H1 (cell line): ENCODE measurements at regions of chr19 and their contacts with region 1.

Region 1: GRCh38 chr19:48872182-48872883 is at the start of gene PPP1R15A:
- DNase-seq: peak; percentile 95 to 100
- H3K4me3 ChIP-seq: peak within 1 kb of the TSS; percentile 80 to 97 (median 92)
- H3K27ac ChIP-seq: peak within 1 kb of the TSS; percentile 98
- H3K4me1 ChIP-seq: peaks cover 5 to 27% (median 15%) of the 10 kb centered on the region in 4 experiments
- H3K27me3 ChIP-seq: no peaks in the 10 kb centered on the region
- CTCF ChIP-seq: peak in 1 of 3 experiments; percentile 4; a peak in 1 of 4 replicates
- EP300 ChIP-seq: no peak
- POLR2A ChIP-seq: peak; percentile 99
- RAD21 ChIP-seq: no peak
- total RNA-seq, gene PPP1R15A: 12.8 and 14.0 TPM in 2 replicates

Region 2: DNA sequence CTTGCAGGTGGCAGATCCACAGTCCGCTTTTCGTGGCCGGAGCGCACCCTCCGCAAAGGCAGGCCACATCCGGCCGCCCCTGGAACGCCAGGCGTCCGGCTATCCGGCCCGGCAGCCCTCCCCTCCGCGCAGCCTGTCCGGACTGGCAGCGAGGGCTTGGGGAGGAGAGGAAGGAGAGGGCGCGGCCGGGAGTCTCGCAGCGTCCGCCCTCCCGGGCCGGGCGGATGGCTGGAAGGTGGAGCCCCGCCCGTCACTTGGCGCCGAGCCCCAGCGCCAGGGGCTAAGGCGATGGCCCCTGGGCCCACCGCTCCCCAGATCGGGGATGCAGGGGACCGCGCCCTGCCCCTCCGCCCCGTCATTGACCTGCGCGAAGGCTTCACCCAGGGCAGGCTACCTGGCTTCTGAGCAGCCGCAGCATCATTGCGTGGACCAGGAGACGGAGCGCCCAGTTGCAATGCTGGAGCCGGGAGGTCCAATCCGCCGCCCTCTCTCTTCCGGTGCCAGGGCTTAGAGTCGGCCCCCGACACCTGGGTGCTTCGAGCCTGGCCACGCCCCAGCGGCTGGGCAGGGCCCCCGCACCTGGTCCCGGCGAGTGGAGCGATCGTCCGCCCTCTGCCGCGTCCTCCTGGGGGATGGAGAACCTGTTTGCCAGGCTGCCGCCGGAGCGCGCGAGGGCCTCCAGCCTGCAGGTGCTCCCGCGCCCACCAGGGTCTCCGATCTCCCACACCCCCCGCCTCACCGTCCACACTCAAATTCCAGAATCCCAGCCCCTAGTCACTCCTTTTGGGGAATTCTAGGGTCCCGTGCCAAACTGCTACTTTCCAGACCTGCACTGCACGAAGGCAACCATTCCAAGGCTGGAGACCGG is 119.6 kb before region 1 on chr19 and contains the start of gene FUT1:
- CTCF ChIA-PET with region 1: no interaction called
- POLR2A ChIA-PET with region 1: no interaction called
- DNase-seq: peak; percentile 61 to 94
- H3K4me3 ChIP-seq: peak within 1 kb of the TSS; percentile 92 to 97 (median 96)
- H3K27ac ChIP-seq: peak within 1 kb of the TSS; percentile 64; the same call in 1 of the 2 replicates
- H3K4me1 ChIP-seq: peaks cover 3 to 25% (median 18%) of the 10 kb centered on the region in 4 experiments
- H3K27me3 ChIP-seq: no peaks in the 10 kb centered on the region
- CTCF ChIP-seq: peak in 2 of 3 experiments; percentile 14 to 28; a peak in 2 of 4 replicates
- EP300 ChIP-seq: peak in 1 of 2 experiments; percentile 54; a peak in 1 of 3 replicates
- POLR2A ChIP-seq: peak in 1 of 2 experiments; percentile 73; a peak in 2 of 3 replicates
- RAD21 ChIP-seq: no peak; a peak in 1 of 4 replicates
- total RNA-seq, gene FUT1: 12.2 and 12.9 TPM in 2 replicates

Region 3: DNA sequence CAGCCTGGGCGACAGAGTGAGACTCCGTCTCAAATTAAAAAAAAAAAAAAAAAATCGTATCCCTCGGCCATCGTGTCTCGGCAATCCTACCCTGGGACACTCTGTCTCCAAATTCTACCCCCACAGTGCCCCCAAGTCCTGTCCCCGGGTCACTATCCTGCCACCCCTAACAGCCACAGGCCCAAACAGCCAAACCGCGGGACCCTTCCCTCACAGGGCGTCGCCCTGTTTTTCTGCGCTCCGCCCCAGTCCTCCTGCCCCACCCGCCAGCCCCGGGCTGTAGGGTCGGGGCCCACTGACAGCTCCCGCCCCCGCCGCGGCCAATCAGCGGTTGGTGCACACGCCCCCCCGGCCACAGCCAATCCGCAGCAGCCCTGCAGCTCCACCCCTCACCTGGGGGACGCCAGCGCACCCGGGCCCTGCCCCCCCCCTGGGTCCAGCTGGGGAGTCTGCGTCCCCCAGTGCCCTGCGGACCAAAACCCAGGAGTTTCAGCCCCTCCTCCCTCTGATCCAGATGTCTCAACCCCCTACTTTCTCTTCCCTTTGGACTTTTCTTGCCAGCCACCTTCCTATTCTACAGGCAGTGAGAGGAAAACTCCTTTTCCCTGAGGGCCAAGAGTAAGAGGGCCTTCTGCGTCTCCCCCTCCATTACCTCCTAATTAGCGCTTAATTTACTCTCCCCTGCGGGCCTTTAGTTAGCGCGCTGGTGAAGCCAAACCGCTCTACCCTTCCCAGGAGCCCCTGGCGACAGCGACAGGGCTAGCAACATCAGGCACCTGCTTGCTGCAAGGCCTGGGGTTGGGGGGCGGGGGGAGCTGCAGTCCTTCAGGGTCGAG is 60.0 kb before region 1 on chr19:
- CTCF ChIA-PET with region 1: no interaction called
- POLR2A ChIA-PET with region 1: interaction called, 12 read pairs
- DNase-seq: peak in 1 of 2 experiments; percentile 89
- H3K4me3 ChIP-seq: peak overlapping the region in 3 of 4 experiments; percentile 3 to 52 (median 26); a peak in 5 of 8 replicates
- H3K27ac ChIP-seq: peak overlapping the region; percentile 71; the same call in 1 of the 2 replicates
- H3K4me1 ChIP-seq: peaks cover 3 to 15% (median 10%) of the 10 kb centered on the region in 4 experiments
- H3K27me3 ChIP-seq: peaks cover 0 to 11% (median 0%) of the 10 kb centered on the region in 4 experiments; a peak in 3 of 7 replicates
- CTCF ChIP-seq: peak in 2 of 3 experiments; percentile 13 to 20; a peak in 2 of 4 replicates
- EP300 ChIP-seq: peak in 1 of 2 experiments; percentile 94; a peak in 1 of 3 replicates
- POLR2A ChIP-seq: 0 out of 3 replicates have a peak, but pooled peaks of 1 of the 2 experiments have one; percentile 28
- RAD21 ChIP-seq: no peak; a peak in 1 of 4 replicates

Region 4: GRCh38 chr19:48842789-48843162 is 29.6 kb before region 1 on chr19:
- CTCF ChIA-PET with region 1: interaction called, 7 read pairs
- POLR2A ChIA-PET with region 1: interaction called, 40 read pairs
- DNase-seq: peak in 1 of 2 experiments; percentile 75
- H3K4me3 ChIP-seq: no peak overlapping the region
- H3K27ac ChIP-seq: no peak overlapping the region
- H3K4me1 ChIP-seq: no peaks in the 10 kb centered on the region; a peak in 1 of 7 replicates
- H3K27me3 ChIP-seq: no peaks in the 10 kb centered on the region
- CTCF ChIP-seq: peak; percentile 27 to 80 (median 76)
- EP300 ChIP-seq: no peak
- POLR2A ChIP-seq: no peak
- RAD21 ChIP-seq: peak; percentile 71 to 81

Region 5: GRCh38 chr19:48858984-48859710 is 13.2 kb before region 1 on chr19:
- CTCF ChIA-PET with region 1: interaction called, 4 read pairs
- POLR2A ChIA-PET with region 1: interaction called, 43 read pairs
- DNase-seq: peak in 1 of 2 experiments; percentile 69
- H3K4me3 ChIP-seq: no peak overlapping the region
- H3K27ac ChIP-seq: no peak overlapping the region
- H3K4me1 ChIP-seq: peaks cover 0 to 6% (median 0%) of the 10 kb centered on the region in 4 experiments; a peak in 1 of 7 replicates
- H3K27me3 ChIP-seq: no peaks in the 10 kb centered on the region; a peak in 1 of 7 replicates
- CTCF ChIP-seq: no peak
- EP300 ChIP-seq: no peak
- POLR2A ChIP-seq: no peak
- RAD21 ChIP-seq: no peak

Region 6: DNA sequence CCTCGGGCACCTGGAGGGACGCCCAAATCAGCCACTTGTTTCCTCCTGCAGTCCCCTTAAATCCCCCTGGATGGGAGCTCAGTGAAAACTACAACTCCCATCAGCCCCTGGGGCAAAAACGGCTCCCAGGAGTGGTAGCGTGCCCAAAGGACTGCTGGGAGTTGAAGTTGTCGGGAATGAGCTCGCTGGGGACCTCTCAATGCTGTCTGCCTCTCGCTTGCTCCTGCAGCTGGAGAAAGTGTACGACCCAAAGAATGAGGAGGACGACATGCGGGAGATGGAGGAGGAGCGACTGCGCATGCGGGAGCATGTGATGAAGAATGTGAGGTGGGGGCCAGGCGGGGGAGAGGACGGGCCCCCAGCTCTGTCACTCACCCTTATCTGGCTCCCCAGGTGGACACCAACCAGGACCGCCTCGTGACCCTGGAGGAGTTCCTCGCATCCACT is 46.5 kb after region 1 on chr19:
- CTCF ChIA-PET with region 1: no interaction called
- POLR2A ChIA-PET with region 1: interaction called, 16 read pairs
- DNase-seq: peak; percentile 47 to 79
- H3K4me3 ChIP-seq: no peak overlapping the region
- H3K27ac ChIP-seq: no peak overlapping the region
- H3K4me1 ChIP-seq: no peaks in the 10 kb centered on the region
- H3K27me3 ChIP-seq: no peaks in the 10 kb centered on the region
- CTCF ChIP-seq: no peak
- EP300 ChIP-seq: no peak
- POLR2A ChIP-seq: no peak
- RAD21 ChIP-seq: no peak

Region 7: DNA sequence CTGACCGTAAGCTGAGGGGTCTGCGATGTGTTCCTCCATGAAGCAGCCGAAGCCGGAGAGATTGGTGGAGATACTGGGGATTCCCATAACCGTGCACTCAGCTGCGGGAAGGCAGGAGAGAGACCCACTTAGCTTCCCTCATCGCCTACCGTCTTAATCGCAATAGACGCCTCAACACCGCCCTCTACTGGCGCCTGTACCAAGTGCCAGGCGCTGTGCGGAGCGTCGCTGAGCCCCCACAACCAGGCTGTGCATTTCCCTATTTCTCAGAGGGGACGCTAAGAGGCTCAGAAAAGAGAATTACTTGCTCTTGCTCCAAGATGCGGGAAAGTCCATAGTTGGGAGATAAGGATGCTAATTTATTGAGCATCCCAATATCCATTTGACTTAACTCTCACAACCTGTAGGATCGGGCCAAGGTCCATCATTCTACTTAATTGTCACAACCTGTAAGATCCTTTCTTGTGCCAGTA is 98.6 kb after region 1 on chr19:
- CTCF ChIA-PET with region 1: interaction called, 8 read pairs
- POLR2A ChIA-PET with region 1: interaction called, 49 read pairs
- DNase-seq: peak in 1 of 2 experiments; percentile 96
- H3K4me3 ChIP-seq: no peak overlapping the region
- H3K27ac ChIP-seq: no peak overlapping the region
- H3K4me1 ChIP-seq: peaks cover 0 to 3% (median 1%) of the 10 kb centered on the region in 4 experiments; a peak in 4 of 7 replicates
- H3K27me3 ChIP-seq: no peaks in the 10 kb centered on the region
- CTCF ChIP-seq: peak; percentile 94 to 98 (median 95)
- EP300 ChIP-seq: no peak
- POLR2A ChIP-seq: no peak
- RAD21 ChIP-seq: peak; percentile 87 to 93

Region 8: GRCh38 chr19:48999481-49000325 is 127.4 kb after region 1 on chr19:
- CTCF ChIA-PET with region 1: no interaction called
- POLR2A ChIA-PET with region 1: no interaction called
- DNase-seq: peak; percentile 59 to 88
- H3K4me3 ChIP-seq: no peak overlapping the region
- H3K27ac ChIP-seq: no peak overlapping the region
- H3K4me1 ChIP-seq: peaks cover 0 to 6% (median 2%) of the 10 kb centered on the region in 4 experiments; a peak in 2 of 7 replicates
- H3K27me3 ChIP-seq: no peaks in the 10 kb centered on the region
- CTCF ChIP-seq: peak; percentile 81 to 98 (median 97)
- EP300 ChIP-seq: no peak
- POLR2A ChIP-seq: no peak
- RAD21 ChIP-seq: peak; percentile 69 to 72